AG04450 (cell line): ENCODE measurements at regions of chr1 and their contacts with region 1.

Region 1: DNA sequence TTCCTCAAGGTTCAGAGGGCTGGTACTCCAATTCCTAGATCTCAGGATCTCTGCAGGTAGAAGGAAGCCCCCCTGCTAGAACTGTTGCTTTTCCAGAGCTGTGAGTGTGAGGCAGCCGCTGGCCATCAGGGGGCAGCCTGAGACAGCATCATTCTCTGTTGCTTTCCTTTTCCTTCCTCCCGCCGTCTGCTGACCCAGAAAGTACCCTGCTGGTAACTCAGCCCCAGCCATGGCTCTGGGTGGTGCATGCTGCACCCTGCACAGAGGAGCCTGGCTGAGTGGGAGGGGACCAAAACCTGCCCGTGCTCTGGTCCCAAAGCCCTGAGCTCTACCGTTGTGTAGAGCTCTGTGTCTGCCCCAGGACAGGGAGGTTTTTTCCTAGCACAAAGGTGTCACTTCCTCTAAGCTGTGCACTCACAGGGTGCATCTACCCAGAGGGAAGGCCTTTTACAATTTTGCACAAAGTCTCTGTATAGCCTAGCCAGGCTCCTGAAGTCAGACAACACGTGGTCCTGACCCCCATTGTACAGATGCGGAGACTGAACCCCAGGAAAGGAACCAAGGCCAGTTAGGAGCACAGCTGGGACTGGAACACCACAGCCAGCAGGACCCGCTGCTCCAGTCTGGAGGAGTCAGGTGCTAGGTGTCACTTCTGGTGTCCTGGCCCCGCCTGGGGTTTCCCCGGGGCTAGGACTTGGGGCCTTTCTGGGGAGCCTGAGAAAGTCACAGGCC is 5.6 kb upstream of the FAM131C start:
- DNase-seq: peak; percentile 34
- H3K4me3 ChIP-seq: no peak overlapping the region
- H3K27ac ChIP-seq: no peak overlapping the region
- H3K27me3 ChIP-seq: no peaks in the 10 kb centered on the region
- CTCF ChIP-seq: peak; percentile 92

Region 2: DNA sequence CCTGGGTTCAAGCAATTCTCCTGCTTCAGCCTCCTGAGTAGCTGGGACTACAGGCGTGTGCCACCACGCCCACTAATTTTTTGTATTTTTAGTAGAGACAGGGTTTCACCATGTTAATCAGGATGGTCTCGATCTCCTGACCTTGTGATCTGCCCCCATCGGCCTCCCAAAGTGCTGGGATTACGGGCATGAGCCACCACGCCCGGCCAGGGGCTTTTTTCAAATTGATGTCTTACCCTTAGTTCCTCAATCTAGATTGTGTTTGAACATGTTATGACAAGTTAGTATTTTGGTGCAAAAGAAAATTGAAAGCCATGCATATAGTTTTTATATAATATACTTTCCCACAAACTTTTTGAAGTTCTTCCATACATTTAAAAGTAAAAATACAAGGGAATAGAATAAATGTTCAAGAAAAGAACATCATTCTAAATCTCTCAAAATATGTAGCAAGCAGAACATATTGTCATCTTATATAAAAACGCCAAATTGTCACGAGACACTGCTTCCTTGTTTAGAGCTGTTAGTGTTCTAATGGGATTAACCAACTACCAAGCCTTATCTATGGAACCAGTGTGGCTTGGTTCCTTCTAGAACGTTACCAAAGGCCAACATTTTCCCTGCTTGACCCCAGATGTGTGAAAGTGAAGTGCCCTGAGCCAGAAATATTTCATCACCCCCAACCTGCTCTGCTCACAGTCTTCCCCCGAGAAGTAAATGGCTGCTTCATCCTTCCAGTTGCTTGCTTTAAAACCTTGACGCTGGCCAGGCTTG is 404.5 kb before region 1 on chr1:
- CTCF ChIA-PET with region 1: no interaction called
- POLR2A ChIA-PET with region 1: no interaction called
- DNase-seq: no peak
- H3K4me3 ChIP-seq: no peak overlapping the region
- H3K27ac ChIP-seq: no peak overlapping the region
- H3K27me3 ChIP-seq: no peaks in the 10 kb centered on the region
- CTCF ChIP-seq: no peak

Region 3: GRCh38 chr1:16091296-16091695 is 12.2 kb after region 1 on chr1:
- CTCF ChIA-PET with region 1: interaction called, 28 read pairs
- POLR2A ChIA-PET with region 1: no interaction called
- DNase-seq: no peak
- H3K4me3 ChIP-seq: no peak overlapping the region
- H3K27ac ChIP-seq: no peak overlapping the region
- H3K27me3 ChIP-seq: no peaks in the 10 kb centered on the region
- CTCF ChIP-seq: no peak

Region 4: GRCh38 chr1:16139473-16139962 is 60.4 kb after region 1 on chr1:
- CTCF ChIA-PET with region 1: interaction called, 27 read pairs
- POLR2A ChIA-PET with region 1: no interaction called
- DNase-seq: peak; percentile 46
- H3K4me3 ChIP-seq: no peak overlapping the region
- H3K27ac ChIP-seq: peak overlapping the region; percentile 65
- H3K27me3 ChIP-seq: no peaks in the 10 kb centered on the region
- CTCF ChIP-seq: no peak

Region 5: DNA sequence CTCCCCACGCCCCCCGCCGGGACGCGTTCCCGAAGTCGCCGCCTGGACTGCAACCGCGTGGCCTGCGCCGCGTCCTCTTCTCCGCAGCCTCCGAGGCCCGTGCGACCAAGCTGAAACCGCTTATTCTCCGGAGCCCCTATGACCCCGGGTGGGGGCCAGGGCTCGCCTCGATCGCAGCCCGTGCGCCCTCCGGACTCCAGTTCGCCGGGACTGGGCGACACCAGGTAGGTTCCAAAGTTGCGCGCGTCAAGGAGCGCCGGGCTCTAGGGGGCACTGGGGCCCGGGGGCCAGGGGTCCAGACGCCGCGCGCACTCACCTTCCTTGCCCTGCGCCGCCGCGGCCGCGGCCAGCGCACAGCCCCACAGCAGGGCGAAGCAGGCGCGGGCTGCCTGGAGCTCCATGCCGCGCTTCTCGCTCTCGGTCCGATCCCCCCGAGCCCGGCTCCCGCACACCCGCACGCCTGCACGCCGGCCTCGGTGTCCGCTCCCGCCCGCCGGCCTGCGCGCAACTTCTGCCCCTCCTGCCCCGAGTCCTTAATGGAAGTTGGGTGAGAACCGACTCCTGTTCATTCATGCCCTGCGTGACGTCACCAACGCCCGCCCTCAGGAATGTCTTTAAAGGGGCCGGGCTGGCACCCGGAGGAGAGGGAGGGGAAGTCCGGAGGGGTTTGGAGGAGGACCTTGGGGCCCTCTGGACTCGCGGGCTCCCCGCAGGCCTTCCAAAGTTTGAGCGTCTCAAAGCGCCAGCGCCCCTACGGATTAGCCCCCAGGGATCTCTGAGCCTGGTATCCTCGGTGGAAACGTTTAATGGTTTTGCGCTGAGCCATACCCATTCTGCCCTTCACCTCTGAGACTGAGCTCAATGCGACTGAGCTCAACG is 76.7 kb after region 1 on chr1 and contains the start of gene EPHA2:
- CTCF ChIA-PET with region 1: interaction called, 81 read pairs
- POLR2A ChIA-PET with region 1: interaction called, 8 read pairs
- DNase-seq: peak; percentile 55
- H3K4me3 ChIP-seq: peak within 1 kb of the TSS; percentile 88
- H3K27ac ChIP-seq: peak within 1 kb of the TSS; percentile 80
- H3K27me3 ChIP-seq: no peaks in the 10 kb centered on the region
- CTCF ChIP-seq: no peak
- polyA plus RNA-seq, gene EPHA2: 19.1 and 26.0 TPM in 2 replicates

Region 6: GRCh38 chr1:16217061-16217785 is 138.1 kb after region 1 on chr1:
- CTCF ChIA-PET with region 1: interaction called, 16 read pairs
- POLR2A ChIA-PET with region 1: no interaction called
- DNase-seq: peak; percentile 85
- H3K4me3 ChIP-seq: peak overlapping the region; percentile 63
- H3K27ac ChIP-seq: no peak overlapping the region
- H3K27me3 ChIP-seq: peaks cover 10% of the 10 kb centered on the region
- CTCF ChIP-seq: no peak

Region 7: DNA sequence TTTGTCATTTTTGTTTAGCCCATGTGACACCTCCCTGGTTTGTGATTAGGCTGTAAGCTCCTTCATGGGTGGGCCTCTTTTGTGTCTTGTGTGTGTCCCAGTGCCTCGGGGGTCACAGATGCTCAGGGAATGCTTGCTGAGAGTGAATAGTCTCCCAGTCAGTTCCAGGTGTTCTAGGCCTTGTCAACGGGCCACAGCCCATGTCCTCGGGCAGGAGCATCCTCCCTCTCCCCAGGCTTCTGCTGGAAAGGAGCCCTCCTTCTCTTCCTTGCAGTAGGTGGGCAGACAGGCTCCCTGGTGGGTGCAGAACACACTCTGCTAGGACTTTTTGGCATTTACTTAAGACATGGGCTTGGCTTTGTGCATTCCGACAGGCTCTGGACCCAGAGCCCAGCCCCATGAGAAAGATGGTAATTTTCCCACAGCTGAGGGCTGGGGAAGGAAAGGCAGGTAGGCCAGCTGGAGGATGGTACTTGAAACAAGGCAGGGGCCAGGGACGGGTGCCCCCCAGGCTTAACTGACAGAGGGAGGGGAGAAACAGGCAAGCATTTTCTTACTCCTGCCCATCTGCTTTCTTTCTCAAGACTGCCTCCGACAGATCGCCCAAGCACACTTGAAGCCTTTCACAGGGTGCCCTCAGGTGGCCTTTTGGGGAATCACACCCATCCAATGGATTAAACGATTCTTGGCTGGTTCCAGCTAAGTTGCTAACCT is 165.0 kb after region 1 on chr1:
- CTCF ChIA-PET with region 1: interaction called, 19 read pairs
- POLR2A ChIA-PET with region 1: no interaction called
- DNase-seq: peak; percentile 58
- H3K4me3 ChIP-seq: no peak overlapping the region
- H3K27ac ChIP-seq: no peak overlapping the region
- H3K27me3 ChIP-seq: no peaks in the 10 kb centered on the region
- CTCF ChIP-seq: peak; percentile 90